ENCODE measurements at regions of chr1 and their contacts with region 1.

Region 1: DNA sequence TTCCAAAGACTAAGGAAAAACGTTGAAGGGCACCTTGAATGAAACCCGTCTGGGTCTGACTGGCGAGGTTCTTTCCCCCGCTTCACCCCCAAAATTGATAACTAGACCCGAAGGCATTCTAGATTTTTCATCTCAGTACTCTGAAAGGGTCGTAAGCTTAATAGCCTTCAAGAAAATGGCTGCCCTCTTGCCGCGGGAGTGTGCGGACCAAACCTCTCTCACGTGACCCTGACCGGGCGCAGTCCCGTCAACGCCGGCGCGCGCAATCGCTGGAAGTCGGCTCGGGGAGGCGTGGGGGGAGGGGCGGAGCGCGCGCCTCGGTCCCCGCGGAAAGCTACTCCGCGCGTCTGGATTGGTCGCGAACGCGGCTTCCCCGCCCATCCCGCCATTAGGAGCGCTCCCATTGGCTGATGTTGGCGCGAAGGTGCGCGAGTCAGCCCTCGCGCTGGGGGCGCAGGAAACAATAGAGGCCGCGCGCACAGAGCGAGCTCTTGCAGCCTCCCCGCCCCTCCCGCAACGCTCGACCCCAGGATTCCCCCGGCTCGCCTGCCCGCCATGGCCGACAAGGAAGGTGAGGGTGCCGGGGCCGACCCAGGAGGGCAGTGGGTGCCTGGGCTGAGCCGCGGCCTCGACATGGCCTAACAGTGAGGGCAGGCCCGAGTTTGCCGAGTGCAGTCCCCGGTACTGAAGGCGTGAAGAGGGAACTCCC is at the start of gene RBBP4:
- DNase-seq: peak; percentile 95 to 99 (median 98)
- ATAC-seq: peak; percentile 91
- H3K4me3 ChIP-seq: peak within 1 kb of the TSS; percentile 87
- H3K4me3 Mint-ChIP-seq: peak within 1 kb of the TSS; percentile 91 to 99 (median 94)
- H3K27ac ChIP-seq: peak within 1 kb of the TSS; percentile 86
- H3K27ac Mint-ChIP-seq: peak within 1 kb of the TSS; percentile 97 to 100 (median 99)
- H3K4me1 ChIP-seq: peaks cover 42 to 45% of the 10 kb centered on the region in 2 donors
- H3K4me1 Mint-ChIP-seq: peaks cover 28 to 73% (median 60%) of the 10 kb centered on the region in 7 donors
- H3K27me3 ChIP-seq: no peaks in the 10 kb centered on the region
- H3K27me3 Mint-ChIP-seq: peaks cover 0 to 2% (median 0%) of the 10 kb centered on the region in 5 donors
- total RNA-seq, gene RBBP4: 130 to 280 (median 162) TPM

Region 2: DNA sequence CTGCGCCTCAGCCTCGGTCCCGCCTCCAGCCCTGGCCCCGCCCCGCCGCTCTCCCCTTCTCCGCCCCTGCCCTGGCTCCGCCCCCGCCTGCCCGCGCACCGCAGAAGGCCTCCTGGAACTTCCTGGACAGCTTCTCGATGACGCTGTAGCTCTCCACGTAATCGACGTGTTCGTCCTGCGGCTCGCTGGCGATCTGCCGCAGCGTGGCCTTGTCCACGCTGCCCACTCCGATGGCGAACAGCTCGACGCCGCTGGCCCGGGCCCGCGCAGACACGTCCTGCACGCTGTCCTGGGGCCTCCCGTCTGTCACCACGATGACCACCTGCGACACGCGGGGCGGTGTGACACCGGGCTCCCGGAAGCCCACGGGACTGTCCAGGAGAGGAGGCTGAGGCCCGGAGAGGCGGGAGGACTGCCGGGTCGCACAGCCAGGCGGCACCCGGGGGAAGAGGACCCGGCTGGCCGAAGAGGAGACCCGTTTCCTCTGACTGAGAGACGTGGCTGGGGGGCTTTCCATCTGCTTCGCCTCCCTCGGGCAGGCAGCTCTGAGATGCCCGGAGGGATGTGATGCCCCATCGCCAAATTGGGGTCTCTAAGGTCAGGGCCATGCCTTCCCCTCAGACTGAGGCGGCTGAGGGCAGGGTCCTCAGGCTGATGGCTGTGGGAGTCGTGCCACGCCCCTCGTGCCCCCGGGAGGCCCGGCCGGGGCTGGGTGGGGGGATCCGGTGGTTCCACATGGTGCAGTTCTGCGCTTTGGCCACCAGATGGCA is 1932.1 kb before region 1 on chr1:
- CTCF ChIA-PET with region 1: no interaction called
- POLR2A ChIA-PET with region 1: no interaction called
- intact Hi-C with region 1: loop called in 1 of 2 experiments (anchors 2 kb)
- DNase-seq: peak; percentile 75 to 97 (median 96)
- ATAC-seq: peak; percentile 78
- H3K4me3 ChIP-seq: peak overlapping the region; percentile 88
- H3K4me3 Mint-ChIP-seq: peak overlapping the region; percentile 83 to 96 (median 91)
- H3K27ac ChIP-seq: peak overlapping the region; percentile 100
- H3K27ac Mint-ChIP-seq: peak overlapping the region; percentile 86 to 97 (median 94)
- H3K4me1 ChIP-seq: peaks cover 10 to 37% of the 10 kb centered on the region in 2 donors
- H3K4me1 Mint-ChIP-seq: peaks cover 18 to 49% (median 38%) of the 10 kb centered on the region in 7 donors
- H3K27me3 ChIP-seq: no peaks in the 10 kb centered on the region
- H3K27me3 Mint-ChIP-seq: no peaks in the 10 kb centered on the region

Region 3: DNA sequence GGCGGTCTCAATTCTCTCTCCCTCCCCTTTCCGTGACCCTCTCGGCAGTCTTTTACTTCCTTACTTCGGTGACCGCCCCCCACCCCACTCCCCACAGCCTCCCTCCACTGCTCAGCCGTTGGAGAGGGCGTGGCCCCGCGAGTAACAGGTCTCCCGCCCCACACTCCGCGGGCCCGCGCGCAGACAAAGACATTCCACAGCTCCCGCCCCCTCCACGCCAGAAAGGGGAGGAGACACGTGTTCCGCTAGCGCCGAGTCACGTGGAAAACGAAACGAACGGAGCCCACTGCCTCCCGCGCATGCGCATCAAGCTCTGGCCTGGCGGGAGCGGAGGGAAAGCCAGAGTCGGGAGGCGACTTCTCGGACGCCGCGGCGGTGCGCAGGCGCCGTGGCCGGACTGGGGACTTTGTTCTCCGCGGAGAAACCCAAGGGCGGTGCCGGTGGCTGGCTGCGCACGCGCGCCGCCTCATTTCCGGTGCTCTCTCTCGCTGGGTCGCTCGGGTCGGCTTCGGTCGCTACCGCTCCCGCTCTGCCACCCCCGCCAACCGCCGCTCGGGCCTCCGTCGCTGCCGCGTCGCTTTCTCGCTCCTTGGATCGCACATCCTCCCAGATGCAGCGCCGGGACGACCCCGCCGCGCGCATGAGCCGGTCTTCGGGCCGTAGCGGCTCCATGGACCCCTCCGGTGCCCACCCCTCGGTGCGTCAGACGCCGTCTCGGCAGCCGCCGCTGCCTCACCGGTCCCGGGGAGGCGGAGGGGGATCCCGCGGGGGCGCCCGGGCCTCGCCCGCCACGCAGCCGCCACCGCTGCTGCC is 637.3 kb before region 1 on chr1 and contains the start of gene KHDRBS1:
- CTCF ChIA-PET with region 1: no interaction called
- POLR2A ChIA-PET with region 1: no interaction called
- intact Hi-C with region 1: loop called in 1 of 2 experiments (anchors 2 kb)
- DNase-seq: peak; percentile 94 to 99 (median 98)
- ATAC-seq: peak; percentile 93
- H3K4me3 ChIP-seq: peak within 1 kb of the TSS; percentile 98
- H3K4me3 Mint-ChIP-seq: peak within 1 kb of the TSS; percentile 89 to 98 (median 96)
- H3K27ac ChIP-seq: peak within 1 kb of the TSS; percentile 96
- H3K27ac Mint-ChIP-seq: peak within 1 kb of the TSS; percentile 90 to 99 (median 97)
- H3K4me1 ChIP-seq: peaks cover 10 to 14% of the 10 kb centered on the region in 2 donors
- H3K4me1 Mint-ChIP-seq: peaks cover 17 to 45% (median 31%) of the 10 kb centered on the region in 7 donors
- H3K27me3 ChIP-seq: no peaks in the 10 kb centered on the region
- H3K27me3 Mint-ChIP-seq: peaks cover 0 to 2% (median 0%) of the 10 kb centered on the region in 5 donors
- total RNA-seq, gene KHDRBS1: 89.2 to 162 (median 125) TPM

Region 4: GRCh38 chr1:32208469-32208868 is 442.4 kb before region 1 on chr1:
- CTCF ChIA-PET with region 1: no interaction called
- POLR2A ChIA-PET with region 1: no interaction called
- intact Hi-C with region 1: no loop called
- DNase-seq: no peak
- ATAC-seq: no peak
- H3K4me3 ChIP-seq: no peak overlapping the region
- H3K4me3 Mint-ChIP-seq: peak overlapping the region in 1 of 10 donors; percentile 25
- H3K27ac ChIP-seq: no peak overlapping the region
- H3K27ac Mint-ChIP-seq: peak overlapping the region in 1 of 9 donors; percentile 46
- H3K4me1 ChIP-seq: peaks cover 8 to 16% of the 10 kb centered on the region in 2 donors
- H3K4me1 Mint-ChIP-seq: peaks cover 7 to 28% (median 18%) of the 10 kb centered on the region in 7 donors
- H3K27me3 ChIP-seq: no peaks in the 10 kb centered on the region
- H3K27me3 Mint-ChIP-seq: no peaks in the 10 kb centered on the region

Region 5: GRCh38 chr1:32291708-32292492 is 359.0 kb before region 1 on chr1 and contains the start of gene HDAC1:
- CTCF ChIA-PET with region 1: no interaction called
- POLR2A ChIA-PET with region 1: interaction called, 3 read pairs
- intact Hi-C with region 1: loop called in 1 of 2 experiments (anchors 2 kb)
- DNase-seq: peak; percentile 91 to 97 (median 94)
- ATAC-seq: peak; percentile 98
- H3K4me3 ChIP-seq: peak within 1 kb of the TSS; percentile 92
- H3K4me3 Mint-ChIP-seq: peak within 1 kb of the TSS; percentile 94 to 100 (median 98)
- H3K27ac ChIP-seq: peak within 1 kb of the TSS; percentile 88
- H3K27ac Mint-ChIP-seq: peak within 1 kb of the TSS; percentile 94 to 99 (median 98)
- H3K4me1 ChIP-seq: peaks cover 38 to 46% of the 10 kb centered on the region in 2 donors
- H3K4me1 Mint-ChIP-seq: peaks cover 37 to 67% (median 48%) of the 10 kb centered on the region in 7 donors
- H3K27me3 ChIP-seq: no peaks in the 10 kb centered on the region
- H3K27me3 Mint-ChIP-seq: no peaks in the 10 kb centered on the region
- total RNA-seq, gene HDAC1: 81.8 to 205 (median 174) TPM

Region 6: DNA sequence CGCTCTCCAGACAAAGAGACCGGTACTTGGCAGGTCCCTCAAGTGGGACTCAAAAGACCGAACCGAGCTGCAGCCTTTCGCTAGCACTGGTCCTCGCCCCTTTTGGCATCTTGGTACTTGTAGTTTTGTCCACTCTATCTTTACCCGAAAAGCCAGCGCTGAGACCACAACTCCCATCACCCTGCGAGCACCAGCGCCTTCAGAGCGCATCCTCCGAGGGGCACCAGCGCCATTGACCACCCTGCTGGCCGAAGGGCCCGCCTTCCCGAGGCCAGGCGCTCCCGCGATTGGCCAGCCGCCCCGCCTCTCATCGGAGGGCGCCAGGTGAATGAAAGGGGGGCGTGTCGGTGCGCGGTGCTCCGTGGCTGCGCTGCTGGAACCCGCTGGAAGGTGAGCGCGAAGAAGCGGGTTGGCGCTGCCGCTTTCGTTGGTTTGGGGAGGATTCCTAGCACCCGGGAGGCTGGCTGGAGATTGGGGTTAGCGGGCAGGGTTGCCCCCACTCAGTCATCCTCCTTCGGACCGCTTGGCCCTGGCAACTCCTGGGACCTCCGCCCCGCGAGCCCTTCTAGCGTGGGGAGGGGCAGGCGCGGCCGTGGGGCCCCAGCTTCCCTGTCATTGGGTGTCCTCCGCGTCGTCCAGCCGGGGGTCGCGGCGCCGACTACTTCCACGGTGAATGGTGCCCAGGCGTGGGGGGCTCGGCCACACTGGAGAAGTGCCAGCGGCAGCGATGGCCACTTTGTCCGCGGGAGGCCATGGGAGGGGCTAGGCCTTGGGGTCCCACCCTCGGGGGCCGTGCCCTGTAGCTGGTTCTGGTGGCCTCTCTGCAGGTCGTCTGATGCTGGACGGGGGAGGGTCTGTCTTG is 186.0 kb before region 1 on chr1 and contains the start of gene ZBTB8B:
- CTCF ChIA-PET with region 1: no interaction called
- POLR2A ChIA-PET with region 1: no interaction called
- intact Hi-C with region 1: no loop called
- DNase-seq: peak in 8 of 9 donors; percentile 7 to 26 (median 13)
- ATAC-seq: peak; percentile 50
- H3K4me3 ChIP-seq: peak within 1 kb of the TSS; percentile 26
- H3K4me3 Mint-ChIP-seq: peak within 1 kb of the TSS; percentile 50 to 88 (median 83)
- H3K27ac ChIP-seq: no peak within 1 kb of the TSS
- H3K27ac Mint-ChIP-seq: no peak within 1 kb of the TSS
- H3K4me1 ChIP-seq: peaks cover 8 to 13% of the 10 kb centered on the region in 2 donors
- H3K4me1 Mint-ChIP-seq: peaks cover 6 to 18% (median 14%) of the 10 kb centered on the region in 7 donors
- H3K27me3 ChIP-seq: peaks cover 0 to 11% of the 10 kb centered on the region in 2 donors
- H3K27me3 Mint-ChIP-seq: peaks cover 48 to 62% (median 56%) of the 10 kb centered on the region in 5 donors
- total RNA-seq, gene ZBTB8B: 0.02 TPM in 1 of 5 experiments, not detected in the others

Region 7: DNA sequence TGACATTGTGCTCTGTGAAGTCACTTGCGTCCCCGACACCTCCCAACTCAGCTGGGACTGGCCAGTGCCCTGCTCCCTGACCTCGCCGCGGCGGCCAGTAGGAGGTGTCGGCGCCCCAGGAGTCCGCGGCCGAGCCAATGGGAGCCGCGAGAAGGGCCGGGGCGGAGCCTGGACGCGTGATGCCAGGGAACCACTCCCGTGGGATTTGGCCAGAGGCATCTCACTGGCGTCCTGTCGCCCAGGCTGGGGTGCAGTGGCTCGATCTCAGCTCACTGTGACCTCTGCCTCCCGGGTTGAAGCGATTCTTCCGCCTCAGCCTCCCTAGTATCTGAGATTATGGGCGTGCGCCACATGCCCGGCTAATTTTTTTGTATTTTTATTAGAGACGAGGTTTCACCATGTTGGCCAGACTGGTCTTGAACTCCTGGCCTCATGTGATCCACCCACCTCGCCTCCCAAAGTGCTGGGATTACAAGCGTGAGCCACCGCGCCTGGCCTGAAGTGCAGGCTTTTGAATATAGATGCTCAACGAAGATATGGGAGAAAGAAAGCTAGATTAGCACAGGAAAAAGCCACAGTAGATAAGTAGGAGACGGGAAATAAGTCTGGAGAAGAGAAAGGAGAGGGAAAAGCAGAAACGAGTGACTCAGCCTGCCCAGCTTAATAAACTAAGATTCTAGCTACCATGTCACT is 38.6 kb before region 1 on chr1:
- CTCF ChIA-PET with region 1: no interaction called
- POLR2A ChIA-PET with region 1: no interaction called
- intact Hi-C with region 1: loop called in 1 of 2 experiments (anchors 2 kb)
- DNase-seq: peak; percentile 7 to 68 (median 14)
- ATAC-seq: peak; percentile 99
- H3K4me3 ChIP-seq: peak overlapping the region; percentile 56
- H3K4me3 Mint-ChIP-seq: peak overlapping the region; percentile 11 to 80 (median 70)
- H3K27ac ChIP-seq: no peak overlapping the region
- H3K27ac Mint-ChIP-seq: peak overlapping the region in 2 of 9 donors; percentile 22 to 62
- H3K4me1 ChIP-seq: no peaks in the 10 kb centered on the region
- H3K4me1 Mint-ChIP-seq: peaks cover 3 to 7% (median 5%) of the 10 kb centered on the region in 7 donors
- H3K27me3 ChIP-seq: no peaks in the 10 kb centered on the region
- H3K27me3 Mint-ChIP-seq: no peaks in the 10 kb centered on the region

Region 8: DNA sequence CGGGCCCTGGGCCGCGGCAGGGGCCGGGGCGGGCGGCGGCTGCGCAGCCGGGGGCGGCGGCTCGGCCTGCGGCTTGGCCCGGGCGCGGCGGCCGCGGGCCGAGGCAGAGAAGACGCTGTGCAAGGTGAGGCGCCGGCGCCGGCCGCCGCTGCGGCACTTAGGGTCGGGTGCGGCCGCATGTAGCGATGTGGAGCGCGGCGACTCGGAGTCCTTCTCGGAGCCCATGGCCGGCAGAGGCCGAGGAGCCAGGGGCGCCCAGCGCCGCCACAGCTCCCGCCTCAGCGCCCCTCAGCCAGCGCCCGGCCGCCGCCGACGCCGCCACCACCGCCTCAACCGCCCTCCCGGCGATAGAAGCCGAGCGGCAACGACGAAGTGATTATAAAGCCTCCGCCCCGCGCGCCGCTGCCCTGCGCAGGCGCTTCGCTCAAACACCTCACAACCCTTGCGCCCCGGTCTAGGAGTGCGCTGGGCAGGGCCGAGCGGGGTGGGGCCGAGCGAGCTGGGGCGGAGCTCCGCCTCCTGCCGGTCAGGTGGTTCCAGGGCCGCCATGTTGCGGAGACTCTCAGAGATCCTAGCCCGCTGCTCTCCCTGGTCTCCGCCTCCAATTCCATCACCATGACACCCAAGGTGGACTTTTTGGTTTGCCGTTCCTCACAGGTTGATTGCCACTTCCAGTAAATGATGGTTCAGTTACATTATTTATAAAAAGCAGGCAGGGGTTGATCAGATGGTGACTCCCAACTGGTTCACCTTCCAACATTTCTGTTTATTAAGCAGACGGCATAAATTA is 313.8 kb after region 1 on chr1 and contains the start of gene RNF19B:
- CTCF ChIA-PET with region 1: no interaction called
- POLR2A ChIA-PET with region 1: interaction called, 7 read pairs
- intact Hi-C with region 1: loop called in 1 of 2 experiments (anchors 1 kb)
- DNase-seq: peak; percentile 85 to 94 (median 90)
- ATAC-seq: peak; percentile 97
- H3K4me3 ChIP-seq: peak within 1 kb of the TSS; percentile 67
- H3K4me3 Mint-ChIP-seq: peak within 1 kb of the TSS; percentile 88 to 93 (median 91)
- H3K27ac ChIP-seq: peak within 1 kb of the TSS; percentile 74
- H3K27ac Mint-ChIP-seq: peak within 1 kb of the TSS; percentile 71 to 96 (median 90)
- H3K4me1 ChIP-seq: peaks cover 19 to 24% of the 10 kb centered on the region in 2 donors
- H3K4me1 Mint-ChIP-seq: peaks cover 23 to 50% (median 37%) of the 10 kb centered on the region in 7 donors
- H3K27me3 ChIP-seq: no peaks in the 10 kb centered on the region
- H3K27me3 Mint-ChIP-seq: peaks cover 0 to 3% (median 0%) of the 10 kb centered on the region in 5 donors
- total RNA-seq, gene RNF19B: 17.1 to 58.1 (median 39.2) TPM

Region 9: GRCh38 chr1:33256701-33257399 is 605.9 kb after region 1 on chr1:
- CTCF ChIA-PET with region 1: no interaction called
- POLR2A ChIA-PET with region 1: no interaction called
- intact Hi-C with region 1: loop called (anchors 2 kb)
- DNase-seq: peak in 8 of 9 donors; percentile 41 to 68 (median 62)
- ATAC-seq: peak; percentile 80
- H3K4me3 ChIP-seq: peak overlapping the region; percentile 84
- H3K4me3 Mint-ChIP-seq: peak overlapping the region; percentile 97 to 100 (median 99)
- H3K27ac ChIP-seq: peak overlapping the region; percentile 74
- H3K27ac Mint-ChIP-seq: peak overlapping the region; percentile 97 to 99 (median 98)
- H3K4me1 ChIP-seq: peaks cover 16 to 31% of the 10 kb centered on the region in 2 donors
- H3K4me1 Mint-ChIP-seq: peaks cover 29 to 47% (median 42%) of the 10 kb centered on the region in 7 donors
- H3K27me3 ChIP-seq: no peaks in the 10 kb centered on the region
- H3K27me3 Mint-ChIP-seq: peaks cover 0 to under 1% (median 0%) of the 10 kb centered on the region in 5 donors